Ovary (tissue), 10 donors: ENCODE measurements at regions of chr3 and their contacts with region 1.

Region 1: DNA sequence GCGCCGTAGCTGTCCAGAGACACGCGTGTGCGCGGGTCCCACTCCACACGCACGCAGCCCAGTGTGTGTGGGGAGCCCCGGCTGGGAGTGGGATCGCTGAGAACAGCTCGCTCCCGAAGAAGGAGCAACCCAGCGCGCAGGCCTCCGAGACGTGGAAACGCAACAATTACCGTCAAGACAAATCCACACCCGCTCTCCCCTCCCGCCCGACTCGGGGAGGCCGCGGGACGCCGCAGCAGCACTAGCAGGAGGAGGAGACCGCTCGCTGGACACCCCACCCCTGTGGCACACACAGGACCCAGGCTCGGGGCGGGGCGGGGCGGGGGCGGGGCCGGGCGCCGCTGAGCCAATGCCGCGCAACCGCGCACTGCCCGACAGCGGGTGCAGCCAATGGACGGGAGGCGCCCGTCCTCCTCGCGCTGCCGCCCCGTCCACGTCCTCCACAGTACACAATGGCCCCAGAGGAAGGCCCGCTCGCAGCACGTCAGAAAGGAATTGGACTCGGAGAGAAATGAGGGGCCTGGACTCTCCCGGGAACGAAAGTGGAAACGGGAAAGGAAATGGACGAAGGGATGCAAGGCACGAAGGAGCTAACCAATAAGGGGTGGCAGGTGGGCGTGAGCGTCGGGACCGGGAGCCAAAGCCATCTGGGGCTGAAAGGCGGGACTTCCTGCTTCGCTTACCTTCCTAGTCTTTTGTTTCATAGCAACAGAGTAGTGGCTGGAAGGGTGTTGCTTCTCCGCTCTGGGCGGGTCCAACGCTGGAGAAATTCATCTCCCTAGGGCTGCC is at the start of gene CBLB:
- DNase-seq: peak; percentile 90 to 94 (median 92)
- H3K4me3 ChIP-seq: peak within 1 kb of the TSS; percentile 92
- H3K27ac ChIP-seq: peak within 1 kb of the TSS; percentile 72 to 95
- H3K4me1 ChIP-seq: peaks cover 4% of the 10 kb centered on the region
- H3K27me3 ChIP-seq: no peaks in the 10 kb centered on the region
- CTCF ChIP-seq: peak in 1 of 3 donors; percentile 22
- EP300 ChIP-seq: no peak
- POLR2A ChIP-seq: peak; percentile 70
- total RNA-seq, gene CBLB: 30.6 to 133 (median 40.5) TPM

Region 2: DNA sequence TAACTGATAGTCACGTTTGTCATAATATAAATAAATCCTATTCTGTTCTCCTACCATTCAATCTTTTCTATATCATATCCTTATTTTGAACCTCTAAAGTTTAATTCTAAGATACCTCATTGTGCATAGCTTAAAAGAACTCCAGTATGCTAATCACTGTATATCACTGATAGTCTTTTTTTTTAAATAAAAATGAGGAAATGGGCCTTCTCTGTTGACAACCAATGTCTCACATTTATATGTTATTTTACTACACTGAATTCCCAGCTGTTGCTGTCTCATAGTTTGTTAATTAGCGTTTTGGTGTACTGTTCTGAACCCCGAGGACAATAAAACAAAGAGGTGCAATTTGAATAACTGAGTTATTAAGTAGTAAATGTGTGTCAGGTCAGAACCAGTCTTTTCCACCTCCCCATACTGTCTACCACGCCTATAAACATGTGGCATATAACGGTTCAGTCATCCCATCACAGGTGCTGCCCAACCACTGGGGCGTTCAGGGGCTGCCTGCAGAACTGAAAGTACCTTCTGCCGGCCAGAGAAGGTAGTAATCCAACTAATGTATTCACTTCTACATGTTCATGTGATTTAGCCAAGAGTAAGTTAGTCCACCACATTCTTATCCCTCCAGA is 15.0 kb before region 1 on chr3:
- intact Hi-C with region 1: no loop called
- DNase-seq: no peak
- H3K4me3 ChIP-seq: no peak overlapping the region
- H3K27ac ChIP-seq: no peak overlapping the region
- H3K4me1 ChIP-seq: no peaks in the 10 kb centered on the region
- H3K27me3 ChIP-seq: no peaks in the 10 kb centered on the region
- CTCF ChIP-seq: no peak
- EP300 ChIP-seq: no peak
- POLR2A ChIP-seq: no peak

Region 3: DNA sequence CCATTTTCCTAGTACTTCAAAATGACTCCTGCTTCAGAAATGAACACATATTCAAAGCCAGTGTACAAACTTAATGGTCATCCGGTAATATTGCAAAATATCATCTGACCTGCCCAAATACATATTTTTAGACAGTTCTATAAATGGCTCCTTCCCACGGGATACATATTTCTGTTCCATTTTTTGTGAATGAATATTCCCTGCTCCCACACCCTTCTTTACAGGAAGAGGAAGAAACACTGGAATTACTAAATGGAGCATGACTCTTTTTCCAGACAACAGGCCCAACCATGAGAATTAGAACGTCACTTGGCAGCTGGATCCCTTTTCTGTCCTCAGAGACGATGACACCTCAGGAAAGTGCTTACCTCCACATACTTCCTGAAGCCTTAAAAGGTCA is 37.9 kb after region 1 on chr3:
- intact Hi-C with region 1: loop called in 1 of 4 experiments (anchors 2 kb)
- DNase-seq: peak in 1 of 5 donors; percentile 63
- H3K4me3 ChIP-seq: no peak overlapping the region
- H3K27ac ChIP-seq: no peak overlapping the region
- H3K4me1 ChIP-seq: peaks cover 3% of the 10 kb centered on the region
- H3K27me3 ChIP-seq: no peaks in the 10 kb centered on the region
- CTCF ChIP-seq: no peak
- EP300 ChIP-seq: peak; percentile 93
- POLR2A ChIP-seq: no peak